ENCODE measurements at regions of chr2 and their contacts with region 1.

Region 1: GRCh38 chr2:148989882-148990493 is 48.5 kb upstream of the LYPD6B start:
- DNase-seq: no peak
- ATAC-seq: peak; percentile 87

Region 2: DNA sequence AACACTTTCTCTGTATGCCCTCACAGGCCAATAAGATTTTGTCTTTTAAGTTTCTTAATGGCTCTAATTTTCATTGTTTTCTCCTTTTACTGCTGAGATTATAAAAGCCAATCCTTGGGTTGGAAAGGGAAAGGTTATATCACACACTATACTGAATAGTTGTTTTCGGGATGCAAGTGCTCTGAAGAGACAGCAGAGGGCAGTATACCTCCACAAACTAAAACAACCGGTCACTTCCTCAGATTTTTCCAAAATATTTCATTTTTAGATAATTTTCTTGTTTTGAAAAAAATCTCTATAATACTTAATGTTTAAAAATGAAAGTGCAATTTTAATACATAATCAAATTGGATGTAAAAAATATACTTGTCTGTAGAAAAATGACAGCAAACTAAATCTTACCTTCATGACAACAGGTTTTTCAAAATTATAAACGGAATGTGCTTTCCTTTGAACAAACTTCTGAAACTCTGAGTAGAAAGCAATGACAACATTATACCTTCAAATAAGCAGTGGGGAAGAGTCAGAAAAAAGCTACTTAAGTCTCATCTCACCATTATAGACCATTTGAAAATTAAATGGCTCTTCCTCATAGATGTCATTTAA is 1052.1 kb before region 1 on chr2:
- intact Hi-C with region 1: loop called (anchors 2 kb)
- DNase-seq: no peak
- ATAC-seq: peak; percentile 57

Region 3: DNA sequence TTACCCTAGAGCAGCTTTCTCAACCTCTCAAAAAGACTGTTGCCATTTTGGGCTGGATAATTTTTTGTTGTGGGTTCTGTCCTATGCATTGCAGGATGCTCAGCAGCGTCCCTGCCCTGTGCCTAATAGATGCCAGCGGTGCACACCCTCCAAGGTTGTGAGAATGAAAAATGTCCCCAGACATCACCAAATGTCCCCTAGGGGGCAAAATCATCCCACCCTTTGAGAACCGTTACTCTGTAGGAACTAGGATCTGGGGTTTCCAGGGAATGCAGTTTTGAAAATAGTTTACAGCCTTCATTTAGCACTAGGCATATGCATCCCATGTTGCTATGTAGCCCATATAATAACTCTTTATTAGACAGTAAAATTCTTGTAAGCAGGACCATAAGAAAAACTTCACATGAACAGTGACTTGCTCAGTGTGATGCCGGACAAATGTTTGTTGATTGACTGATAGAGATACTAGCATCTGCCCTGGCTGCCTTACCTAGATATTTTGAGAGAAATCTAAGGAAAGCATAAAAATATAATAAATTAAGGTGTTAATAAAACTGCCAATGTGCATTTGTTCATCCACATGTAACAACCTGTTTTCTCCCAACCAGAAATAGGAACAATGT is 424.6 kb before region 1 on chr2:
- intact Hi-C with region 1: loop called (anchors 5 kb)
- DNase-seq: no peak
- ATAC-seq: no peak

Measured in Right ventricle myocardium inferior (tissue), 1 donor.